ENCODE measurements at regions of chr1 and their contacts with region 1.

Region 1: DNA sequence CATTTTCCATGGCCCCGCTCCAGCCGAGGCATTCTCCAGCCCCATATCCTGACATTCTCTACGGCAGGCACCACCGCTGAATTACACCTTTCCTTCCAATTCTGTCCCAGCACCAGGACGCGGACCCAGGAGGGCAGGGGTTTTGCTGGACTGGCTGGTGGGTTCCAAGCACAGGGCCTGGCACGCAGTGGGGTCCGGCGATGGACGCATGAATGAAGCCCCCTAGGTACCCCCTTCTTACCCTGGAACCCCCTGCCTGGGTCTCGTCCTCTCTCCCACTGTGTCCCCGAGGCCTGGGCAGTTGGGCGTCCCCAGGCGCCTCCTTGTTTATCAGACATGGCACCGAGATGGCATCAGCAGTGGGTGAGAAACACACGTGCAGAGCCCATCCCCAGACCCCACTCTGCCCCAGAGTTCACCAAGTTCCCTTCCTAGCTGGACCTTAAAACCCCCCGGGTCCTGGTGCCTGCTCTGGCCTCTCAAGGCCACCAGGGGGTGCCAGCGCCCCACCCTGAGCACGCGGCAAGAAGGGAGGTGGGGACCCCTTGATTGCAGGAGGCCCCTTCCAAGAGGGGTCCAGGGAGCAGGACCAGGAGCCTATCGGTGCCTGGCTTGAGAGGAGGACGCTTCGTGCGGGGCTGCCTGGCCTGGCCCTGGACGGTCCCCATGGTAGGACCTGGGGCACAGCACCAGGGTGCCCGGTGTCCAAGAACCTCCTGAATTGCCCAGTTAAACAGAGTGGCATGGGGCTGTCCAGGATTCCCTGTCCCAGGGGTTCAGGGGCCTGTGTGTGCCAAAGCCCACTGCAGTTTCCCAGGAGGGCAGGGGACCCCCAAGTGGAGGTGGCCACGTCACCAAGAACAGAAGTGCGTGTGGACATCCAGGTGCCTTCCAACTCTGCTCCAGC is 46.1 kb downstream of the MEGF6 start:
- DNase-seq: no peak
- H3K4me3 ChIP-seq: no peak overlapping the region
- H3K27ac ChIP-seq: no peak overlapping the region
- H3K4me1 ChIP-seq: no peaks in the 10 kb centered on the region
- H3K27me3 ChIP-seq: no peaks in the 10 kb centered on the region
- CTCF ChIP-seq: peak; percentile 39 to 67 (median 61)
- EP300 ChIP-seq: no peak
- POLR2A ChIP-seq: no peak

Region 2: DNA sequence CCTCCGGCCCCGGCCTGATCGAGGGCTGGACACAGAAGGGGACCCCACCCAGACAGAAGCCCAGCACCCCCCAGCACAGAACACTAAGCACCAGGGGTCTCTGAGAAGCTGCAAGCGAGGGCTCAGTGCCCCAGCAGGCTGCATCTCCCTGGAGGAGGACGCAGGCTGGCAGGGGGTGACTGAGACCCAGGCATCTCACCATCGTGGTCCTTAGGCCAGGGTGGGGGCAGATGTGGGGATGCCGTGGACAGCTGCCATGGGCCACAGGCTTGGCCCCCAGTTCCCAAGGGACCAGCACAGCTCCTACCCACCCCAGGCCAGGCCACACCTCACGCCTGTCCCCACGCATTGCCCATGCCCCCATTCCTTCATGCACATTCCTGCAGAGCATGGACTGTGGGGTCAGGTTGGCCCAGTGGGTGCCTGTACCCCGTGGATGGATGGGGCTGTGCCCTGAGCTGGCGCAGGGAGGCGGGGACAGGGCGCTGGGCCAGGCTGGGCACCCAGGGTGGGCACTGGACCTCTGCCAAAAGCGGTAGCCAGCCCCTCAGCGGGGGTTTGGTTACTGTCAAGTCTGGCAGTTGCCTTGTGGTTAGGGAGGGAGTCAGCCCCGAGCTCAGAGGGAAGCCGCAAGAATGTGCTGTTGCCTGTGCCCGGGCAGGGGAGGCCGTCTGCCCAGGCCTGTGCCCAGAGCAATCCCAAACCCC is 49.2 kb before region 1 on chr1:
- intact Hi-C with region 1: no loop called
- DNase-seq: no peak
- H3K4me3 ChIP-seq: no peak overlapping the region
- H3K27ac ChIP-seq: no peak overlapping the region
- H3K4me1 ChIP-seq: no peaks in the 10 kb centered on the region
- H3K27me3 ChIP-seq: no peaks in the 10 kb centered on the region
- CTCF ChIP-seq: no peak
- EP300 ChIP-seq: no peak
- POLR2A ChIP-seq: no peak

Region 3: DNA sequence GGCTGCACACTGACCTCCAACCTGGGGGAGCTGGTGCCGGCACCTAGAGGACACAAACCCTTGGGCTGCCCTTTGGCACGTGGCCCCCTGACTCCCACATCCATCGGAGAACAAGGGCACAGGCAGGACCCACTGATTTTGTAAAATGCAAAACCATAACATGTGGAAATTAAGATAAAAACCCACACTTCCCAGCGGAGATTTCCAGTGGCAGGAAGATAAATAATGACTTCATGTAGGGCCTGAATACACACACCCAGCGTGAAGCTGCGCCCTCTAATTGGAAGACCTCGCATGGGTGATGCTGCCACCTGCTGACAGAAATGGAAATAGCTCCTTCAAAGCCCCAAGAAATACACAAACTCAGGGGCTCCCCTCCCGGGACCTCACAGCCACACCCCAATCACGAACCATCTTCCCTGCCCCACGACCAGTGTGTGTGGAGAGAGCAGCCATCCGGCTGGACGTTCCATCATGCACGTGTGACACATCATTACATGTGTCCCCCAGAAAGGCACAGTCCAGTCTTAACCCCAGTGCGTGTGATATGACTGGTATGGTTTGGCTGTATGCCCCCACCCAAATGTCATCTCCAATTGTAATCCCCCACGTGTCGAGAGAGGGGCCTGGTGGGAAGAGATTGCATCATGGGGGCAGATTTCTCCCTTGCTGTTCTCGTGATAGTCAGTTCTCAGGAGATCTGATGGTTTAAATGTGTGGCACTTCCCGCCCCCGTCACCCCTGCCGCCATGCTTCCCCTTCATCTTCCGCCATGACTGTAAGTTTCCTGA is 53.9 kb after region 1 on chr1:
- intact Hi-C with region 1: loop called in 2 of 4 experiments (anchors 2 to 5 kb)
- DNase-seq: peak; percentile 61 to 80 (median 75)
- H3K4me3 ChIP-seq: no peak overlapping the region
- H3K27ac ChIP-seq: no peak overlapping the region
- H3K4me1 ChIP-seq: peaks cover 8% of the 10 kb centered on the region
- H3K27me3 ChIP-seq: no peaks in the 10 kb centered on the region
- CTCF ChIP-seq: peak; percentile 72 to 85 (median 77)
- EP300 ChIP-seq: no peak
- POLR2A ChIP-seq: no peak

Region 4: DNA sequence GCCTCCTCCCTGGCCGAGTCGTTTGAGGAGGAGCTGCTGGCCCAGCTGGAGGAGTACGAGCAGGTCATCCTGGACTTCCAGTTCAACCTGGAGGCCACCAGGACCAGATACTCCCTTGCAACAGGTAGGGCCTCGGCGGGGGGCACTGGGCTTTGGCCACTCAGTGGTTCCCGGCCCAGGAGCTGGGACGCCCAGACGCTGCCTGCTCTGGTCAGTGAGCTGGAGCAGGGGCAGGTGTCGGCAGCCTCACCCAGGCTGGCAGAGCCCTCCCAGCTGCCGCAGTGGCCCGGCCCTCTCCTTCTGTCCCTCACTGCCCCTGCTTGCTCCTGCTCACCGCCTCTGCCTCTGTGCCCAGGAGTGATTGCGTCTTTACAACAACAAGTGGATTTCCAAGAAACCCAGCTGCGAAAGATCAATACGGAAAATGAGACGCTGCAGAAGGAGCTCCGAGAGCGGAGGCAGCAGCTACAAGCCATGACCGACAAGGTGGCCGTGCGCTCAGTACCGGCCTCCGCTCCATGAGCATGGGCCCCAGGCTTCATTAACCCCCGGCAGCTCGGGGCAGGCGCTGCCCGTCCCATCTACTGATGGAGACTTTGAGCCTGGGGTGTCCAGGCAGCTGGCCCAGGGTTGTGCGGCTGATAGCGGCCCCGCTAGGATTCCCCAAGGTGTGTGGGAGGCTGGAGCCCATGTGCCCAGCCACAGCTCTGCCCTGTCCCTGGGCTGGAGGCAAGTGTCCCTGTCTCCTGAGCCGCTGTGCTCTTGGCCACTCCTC is 198.4 kb after region 1 on chr1:
- intact Hi-C with region 1: no loop called
- DNase-seq: peak in 1 of 5 donors; percentile 28
- H3K4me3 ChIP-seq: no peak overlapping the region
- H3K27ac ChIP-seq: no peak overlapping the region
- H3K4me1 ChIP-seq: no peaks in the 10 kb centered on the region
- H3K27me3 ChIP-seq: no peaks in the 10 kb centered on the region
- CTCF ChIP-seq: no peak
- EP300 ChIP-seq: no peak
- POLR2A ChIP-seq: no peak

Measured in ovary (tissue), 10 donors.